SK-N-SH (cell line): ENCODE measurements at regions of chr12 and their contacts with region 1.

Region 1: DNA sequence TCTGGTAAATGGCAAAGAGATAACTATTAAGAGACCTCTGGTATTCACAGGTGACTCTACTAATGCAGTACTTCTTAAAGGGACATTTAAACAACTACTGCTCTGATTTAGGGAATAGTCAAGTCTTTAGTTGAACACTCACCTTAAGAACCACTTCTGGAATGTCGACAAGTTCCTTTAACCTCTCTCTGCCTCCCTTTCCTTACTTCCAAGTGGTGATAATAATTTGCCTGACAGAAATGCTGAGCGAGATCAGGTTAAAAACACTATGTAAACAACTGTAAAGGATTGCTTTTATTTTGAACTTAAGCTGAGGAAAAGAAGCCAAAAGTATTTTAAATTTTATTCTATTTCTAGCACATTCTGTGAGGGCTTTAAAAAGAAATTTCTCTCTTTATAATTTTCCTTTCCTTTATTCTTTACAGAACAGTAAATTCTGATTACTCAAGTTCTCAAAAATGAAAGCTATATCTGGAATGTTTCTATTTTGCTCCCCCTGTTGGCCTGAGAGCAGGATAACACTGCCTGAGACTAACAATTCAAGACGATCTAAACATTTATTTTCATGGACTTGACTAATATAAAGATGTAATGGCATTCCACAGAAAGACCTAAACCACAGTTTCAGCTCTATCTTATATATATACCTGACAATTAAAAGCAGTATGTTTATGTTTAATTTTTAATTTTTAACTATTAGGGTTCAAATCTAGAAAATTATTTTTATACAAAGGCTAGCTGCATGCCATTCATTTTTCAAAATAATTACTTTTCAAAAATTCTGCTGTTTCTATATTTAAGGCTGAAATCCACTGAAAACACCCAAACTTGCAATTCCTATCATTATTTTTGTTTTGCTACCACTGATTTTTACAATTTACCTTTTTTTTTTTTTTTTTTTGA is 29.2 kb downstream of the ZCCHC8 start:
- DNase-seq: peak; percentile 58
- H3K4me3 ChIP-seq: no peak overlapping the region; a peak in 1 of 4 replicates
- H3K27ac ChIP-seq: peak overlapping the region; percentile 44 to 71
- H3K4me1 ChIP-seq: peaks cover 0 to 4% of the 10 kb centered on the region in 2 experiments; a peak in 1 of 4 replicates
- H3K27me3 ChIP-seq: no peaks in the 10 kb centered on the region
- CTCF ChIP-seq: peak; percentile 90
- EP300 ChIP-seq: no peak
- RAD21 ChIP-seq: peak; percentile 75

Region 2: DNA sequence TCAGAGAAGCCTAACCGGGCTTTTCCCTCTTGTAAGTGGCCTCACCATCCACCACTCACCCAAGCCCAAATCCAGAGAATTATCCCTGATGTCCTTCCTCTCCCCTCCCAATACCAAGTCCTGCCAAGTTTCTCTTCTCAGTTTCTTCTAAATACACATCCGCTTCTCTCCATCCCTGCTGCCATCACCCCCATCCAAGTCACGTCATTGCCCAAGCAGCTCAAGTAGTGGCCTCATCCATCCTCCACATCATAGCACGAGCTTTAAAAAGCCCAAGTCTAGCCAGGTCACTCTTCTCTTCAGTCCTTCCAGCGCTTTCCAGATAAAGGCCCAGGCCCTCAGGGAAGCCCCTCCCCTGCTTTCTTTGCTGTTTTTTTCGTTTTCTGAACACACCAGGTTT is 322.9 kb before region 1 on chr12:
- CTCF ChIA-PET with region 1: no interaction called
- POLR2A ChIA-PET with region 1: no interaction called
- DNase-seq: no peak
- H3K4me3 ChIP-seq: no peak overlapping the region
- H3K27ac ChIP-seq: no peak overlapping the region
- H3K4me1 ChIP-seq: peaks cover 0 to 2% of the 10 kb centered on the region in 2 experiments; a peak in 1 of 4 replicates
- H3K27me3 ChIP-seq: no peaks in the 10 kb centered on the region
- CTCF ChIP-seq: no peak
- EP300 ChIP-seq: no peak
- RAD21 ChIP-seq: no peak

Region 3: DNA sequence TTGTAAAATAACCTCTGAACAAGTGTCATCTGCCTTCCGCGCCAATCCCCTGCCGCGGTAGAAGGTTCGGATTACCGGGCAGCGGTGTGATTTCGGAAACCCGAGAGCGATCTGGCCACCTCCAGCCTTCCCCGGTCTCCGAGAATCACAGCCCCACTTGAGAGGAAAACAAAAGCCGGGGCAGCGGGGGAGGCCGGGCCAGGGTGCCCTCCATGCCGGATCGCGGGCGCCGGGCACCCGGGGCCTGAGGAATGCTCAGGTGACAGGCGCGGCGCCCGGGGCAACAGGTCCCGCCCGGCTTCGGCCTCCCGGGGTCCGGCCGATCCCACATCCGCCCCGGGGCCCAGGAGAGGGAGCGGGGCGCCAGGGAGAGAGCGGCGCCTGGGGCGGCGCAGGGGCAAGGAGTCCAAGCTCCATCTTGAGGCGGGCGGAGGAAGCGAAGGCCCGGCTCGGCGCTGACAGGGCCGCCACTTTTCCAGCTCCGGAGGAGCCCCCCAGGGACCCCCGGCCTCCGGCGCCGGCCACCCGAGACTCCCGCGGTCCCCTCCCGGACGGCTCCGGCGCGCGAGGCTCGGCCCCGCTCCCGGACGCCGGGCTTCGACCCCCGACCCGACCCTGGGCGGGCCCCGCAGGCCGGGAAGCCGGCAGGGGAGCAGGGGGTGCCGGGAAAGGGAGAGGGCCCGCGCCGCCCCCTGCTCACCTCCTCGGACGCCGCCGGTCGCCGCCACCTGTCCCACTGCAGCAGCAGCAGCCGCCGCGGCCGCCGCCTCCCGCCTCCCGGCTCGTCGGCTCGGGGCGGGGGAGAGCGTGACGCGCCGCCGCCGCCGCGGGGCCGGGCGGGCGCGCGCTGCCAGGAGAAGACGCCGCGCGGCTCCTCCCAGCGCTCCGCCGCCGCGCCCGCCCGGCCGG is 49.5 kb before region 1 on chr12 and contains the start of gene CLIP1:
- CTCF ChIA-PET with region 1: interaction called, 11 read pairs
- POLR2A ChIA-PET with region 1: no interaction called
- DNase-seq: peak; percentile 87
- H3K4me3 ChIP-seq: peak within 1 kb of the TSS; percentile 67 to 79
- H3K27ac ChIP-seq: peak within 1 kb of the TSS; percentile 77 to 94
- H3K4me1 ChIP-seq: peaks cover 11 to 15% of the 10 kb centered on the region in 2 experiments; a peak in 2 of 4 replicates
- H3K27me3 ChIP-seq: no peaks in the 10 kb centered on the region
- CTCF ChIP-seq: peak; percentile 47
- EP300 ChIP-seq: no peak
- RAD21 ChIP-seq: peak; percentile 36
- polyA plus RNA-seq, gene CLIP1: 33.9 and 48.9 TPM in 2 replicates

Region 4: GRCh38 chr12:122459211-122459610 is 12.4 kb before region 1 on chr12:
- CTCF ChIA-PET with region 1: interaction called, 11 read pairs
- POLR2A ChIA-PET with region 1: no interaction called
- DNase-seq: no peak
- H3K4me3 ChIP-seq: no peak overlapping the region
- H3K27ac ChIP-seq: no peak overlapping the region
- H3K4me1 ChIP-seq: no peaks in the 10 kb centered on the region
- H3K27me3 ChIP-seq: no peaks in the 10 kb centered on the region
- CTCF ChIP-seq: no peak
- EP300 ChIP-seq: no peak
- RAD21 ChIP-seq: no peak

Region 5: GRCh38 chr12:122486805-122487426 is 15.3 kb after region 1 on chr12:
- CTCF ChIA-PET with region 1: interaction called, 21 read pairs
- POLR2A ChIA-PET with region 1: interaction called, 8 read pairs
- DNase-seq: no peak
- H3K4me3 ChIP-seq: no peak overlapping the region
- H3K27ac ChIP-seq: no peak overlapping the region
- H3K4me1 ChIP-seq: 0 out of 4 replicates have a peak, but pooled peaks cover 0 to under 1% of the 10 kb centered on the region in 2 experiments
- H3K27me3 ChIP-seq: no peaks in the 10 kb centered on the region
- CTCF ChIP-seq: no peak
- EP300 ChIP-seq: no peak
- RAD21 ChIP-seq: no peak